Left ventricle myocardium inferior (tissue), 1 donor: ENCODE measurements at regions of chr11 and their contacts with region 1.

Region 1: DNA sequence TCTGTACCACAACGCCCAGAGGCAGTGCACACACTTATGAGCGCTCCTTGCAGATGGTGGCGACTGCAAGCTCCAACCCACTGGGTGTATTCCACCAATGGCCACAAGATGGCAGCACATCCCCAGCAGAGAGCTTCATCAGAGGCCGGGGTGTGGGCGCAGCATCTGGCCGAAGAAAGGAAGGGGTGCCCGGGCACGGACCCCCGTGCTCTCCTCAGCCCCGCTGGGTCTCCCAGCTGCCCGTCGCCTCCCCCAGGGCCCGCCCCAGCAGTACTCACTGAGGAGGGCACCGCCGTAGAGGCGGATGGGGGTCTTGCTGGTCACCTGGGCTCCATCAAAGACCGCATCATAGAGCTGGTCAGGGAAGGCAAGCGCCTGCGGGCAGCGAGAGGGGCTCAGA is 14.2 kb downstream of the TP53I11 start:
- DNase-seq: peak; percentile 81
- H3K4me3 ChIP-seq: no peak overlapping the region
- H3K27ac ChIP-seq: no peak overlapping the region
- H3K4me1 ChIP-seq: peaks cover 55% of the 10 kb centered on the region
- H3K27me3 ChIP-seq: no peaks in the 10 kb centered on the region
- CTCF ChIP-seq: peak; percentile 98

Region 2: DNA sequence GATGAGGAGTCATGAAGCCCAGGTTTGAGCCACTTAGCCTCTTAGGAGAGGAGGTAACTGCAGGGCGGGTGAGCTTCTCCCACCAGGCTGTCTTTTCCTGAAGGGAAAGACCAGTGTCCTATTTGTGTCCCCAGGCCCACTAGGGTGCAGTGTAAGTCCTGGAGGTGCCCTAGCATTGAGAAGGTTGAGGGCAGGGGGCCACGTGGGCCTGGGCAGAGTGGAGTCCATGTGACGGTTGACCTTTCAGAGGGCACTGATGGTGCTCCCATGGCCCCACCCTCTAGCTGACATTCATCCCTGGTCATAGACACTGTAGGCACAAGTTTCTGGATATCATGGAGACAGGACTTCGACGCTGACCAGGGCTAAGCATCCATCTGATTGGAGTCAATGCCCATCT is 58.2 kb after region 1 on chr11:
- intact Hi-C with region 1: no loop called
- DNase-seq: no peak
- H3K4me3 ChIP-seq: no peak overlapping the region
- H3K27ac ChIP-seq: no peak overlapping the region
- H3K4me1 ChIP-seq: peaks cover 46% of the 10 kb centered on the region
- H3K27me3 ChIP-seq: no peaks in the 10 kb centered on the region
- CTCF ChIP-seq: no peak

Region 3: DNA sequence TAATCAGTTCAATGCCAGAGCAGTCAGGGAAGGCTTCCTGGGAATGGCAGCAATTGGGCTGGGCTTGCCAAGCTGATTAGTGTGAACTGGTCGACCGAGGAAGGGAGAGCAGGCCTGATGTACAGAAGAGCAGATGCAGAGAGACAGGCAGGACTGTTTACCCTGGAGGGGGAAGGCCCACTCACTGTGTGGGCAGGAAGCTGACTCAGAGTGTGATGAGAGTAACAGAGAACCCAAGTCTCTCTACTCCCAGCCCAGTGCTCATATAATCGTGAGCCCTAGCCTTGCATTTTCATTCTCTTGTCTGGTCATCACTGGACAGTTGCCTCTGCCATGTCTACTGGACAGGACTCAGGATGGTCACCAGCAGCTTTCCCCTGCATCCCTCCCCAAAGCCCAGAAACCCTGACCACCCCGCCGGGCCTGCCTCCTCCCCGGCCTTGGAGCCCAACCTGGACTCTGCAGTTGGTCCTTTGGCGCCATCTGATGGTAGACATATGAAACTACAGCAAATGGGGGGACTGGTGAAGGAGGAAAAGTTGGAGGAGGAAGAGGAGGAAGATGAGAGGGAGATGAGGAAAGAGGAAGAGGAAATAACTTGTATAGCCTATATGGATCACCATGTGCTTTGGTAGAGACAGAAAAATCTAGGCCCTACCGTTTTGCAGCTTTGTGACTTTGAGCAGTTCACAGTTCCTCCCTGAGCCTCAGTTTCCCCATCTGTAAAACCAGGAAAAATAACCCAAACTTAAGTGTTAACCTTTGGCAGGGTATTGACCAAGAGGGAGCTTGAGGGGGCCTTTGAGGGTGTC is 166.5 kb after region 1 on chr11:
- intact Hi-C with region 1: loop called (anchors 2 kb)
- DNase-seq: no peak
- H3K4me3 ChIP-seq: no peak overlapping the region
- H3K27ac ChIP-seq: peak overlapping the region; percentile 47
- H3K4me1 ChIP-seq: peaks cover 22% of the 10 kb centered on the region
- H3K27me3 ChIP-seq: peaks cover 5% of the 10 kb centered on the region
- CTCF ChIP-seq: peak; percentile 98